Activated CD4-positive, alpha-beta memory T cell treated with anti-CD3 and anti-CD28 coated beads for 36 hours (primary cell): ENCODE measurements at regions of chr17 and their contacts with region 1.

Region 1: GRCh38 chr17:76014184-76014924 is 12.8 kb downstream of the EVPL start:
- DNase-seq: peak; percentile 85
- H3K4me3 Mint-ChIP-seq: no peak overlapping the region
- H3K27ac Mint-ChIP-seq: peak overlapping the region; percentile 15
- H3K4me1 Mint-ChIP-seq: peaks cover 5% of the 10 kb centered on the region
- H3K27me3 Mint-ChIP-seq: no peaks in the 10 kb centered on the region

Region 2: DNA sequence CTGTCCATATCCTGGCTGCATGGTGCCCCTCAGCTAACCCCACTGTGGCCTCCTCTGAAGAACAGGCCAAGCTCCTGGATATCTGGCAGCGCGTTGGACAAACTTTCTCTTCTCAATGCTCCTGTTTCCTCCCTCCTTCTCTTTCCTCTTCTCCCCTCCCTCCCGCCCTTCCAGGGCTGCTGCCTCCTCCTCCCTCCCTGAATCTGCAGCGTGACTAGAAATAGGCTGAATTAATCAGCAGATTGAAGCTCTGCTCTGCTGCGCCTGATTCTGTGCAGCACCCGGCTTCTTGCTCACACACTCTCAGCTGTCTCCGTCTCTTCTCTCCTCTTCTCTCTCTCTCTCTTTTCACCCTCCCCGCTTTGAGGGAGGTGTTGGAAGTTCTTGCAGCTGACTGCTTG is 538.1 kb before region 1 on chr17:
- CTCF ChIA-PET with region 1: no interaction called
- POLR2A ChIA-PET with region 1: no interaction called
- intact Hi-C with region 1: no loop called
- DNase-seq: no peak
- H3K4me3 Mint-ChIP-seq: no peak overlapping the region
- H3K27ac Mint-ChIP-seq: no peak overlapping the region
- H3K4me1 Mint-ChIP-seq: no peaks in the 10 kb centered on the region
- H3K27me3 Mint-ChIP-seq: no peaks in the 10 kb centered on the region

Region 3: DNA sequence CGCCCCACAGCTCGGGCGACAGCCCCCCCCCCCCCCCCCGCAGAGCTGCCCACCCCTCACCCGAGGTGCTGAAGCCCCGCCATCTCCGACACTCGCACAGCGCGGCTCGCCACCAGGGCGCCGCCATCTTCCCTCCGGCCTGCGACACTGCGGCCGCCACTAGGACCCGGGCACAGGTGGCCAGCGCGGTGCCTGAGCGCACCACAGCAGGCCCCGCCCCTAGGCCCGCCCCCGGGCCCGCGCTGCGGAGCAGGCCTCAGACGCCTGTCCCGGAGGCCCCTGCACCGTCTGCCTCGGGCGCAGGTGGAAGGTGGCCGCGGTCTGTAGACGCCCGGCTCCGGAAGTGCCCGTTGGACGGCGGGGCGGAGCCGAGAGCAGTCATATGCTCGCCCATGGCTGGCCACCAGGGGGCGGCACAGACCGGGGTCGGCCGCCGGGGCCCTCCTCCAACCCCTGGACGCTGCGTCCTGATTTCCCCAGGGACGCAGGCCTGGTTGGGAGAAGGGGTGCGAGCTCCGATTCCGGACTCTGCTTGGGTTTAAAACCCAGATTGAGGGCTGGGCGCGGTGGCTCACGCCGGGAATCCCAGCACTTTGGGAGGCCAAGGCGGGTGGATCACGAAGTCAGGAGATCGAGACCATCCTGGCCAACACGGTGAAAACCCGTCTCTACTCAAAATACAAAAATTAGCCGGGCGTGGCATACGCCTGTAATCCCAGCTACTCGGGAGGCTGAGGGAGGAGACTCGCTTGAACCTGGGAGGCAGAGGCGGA is 109.4 kb before region 1 on chr17 and contains the start of gene MRPL38:
- CTCF ChIA-PET with region 1: interaction called, 21 read pairs
- POLR2A ChIA-PET with region 1: no interaction called
- intact Hi-C with region 1: no loop called
- DNase-seq: peak; percentile 97
- H3K4me3 Mint-ChIP-seq: peak within 1 kb of the TSS; percentile 99
- H3K27ac Mint-ChIP-seq: peak within 1 kb of the TSS; percentile 90
- H3K4me1 Mint-ChIP-seq: peaks cover 17% of the 10 kb centered on the region
- H3K27me3 Mint-ChIP-seq: no peaks in the 10 kb centered on the region
- total RNA-seq, gene MRPL38: 108 TPM

Region 4: GRCh38 chr17:76056835-76057234 is 42.5 kb after region 1 on chr17:
- CTCF ChIA-PET with region 1: interaction called, 11 read pairs
- POLR2A ChIA-PET with region 1: no interaction called
- intact Hi-C with region 1: no loop called
- DNase-seq: no peak
- H3K4me3 Mint-ChIP-seq: no peak overlapping the region
- H3K27ac Mint-ChIP-seq: no peak overlapping the region
- H3K4me1 Mint-ChIP-seq: peaks cover 12% of the 10 kb centered on the region
- H3K27me3 Mint-ChIP-seq: no peaks in the 10 kb centered on the region

Region 5: DNA sequence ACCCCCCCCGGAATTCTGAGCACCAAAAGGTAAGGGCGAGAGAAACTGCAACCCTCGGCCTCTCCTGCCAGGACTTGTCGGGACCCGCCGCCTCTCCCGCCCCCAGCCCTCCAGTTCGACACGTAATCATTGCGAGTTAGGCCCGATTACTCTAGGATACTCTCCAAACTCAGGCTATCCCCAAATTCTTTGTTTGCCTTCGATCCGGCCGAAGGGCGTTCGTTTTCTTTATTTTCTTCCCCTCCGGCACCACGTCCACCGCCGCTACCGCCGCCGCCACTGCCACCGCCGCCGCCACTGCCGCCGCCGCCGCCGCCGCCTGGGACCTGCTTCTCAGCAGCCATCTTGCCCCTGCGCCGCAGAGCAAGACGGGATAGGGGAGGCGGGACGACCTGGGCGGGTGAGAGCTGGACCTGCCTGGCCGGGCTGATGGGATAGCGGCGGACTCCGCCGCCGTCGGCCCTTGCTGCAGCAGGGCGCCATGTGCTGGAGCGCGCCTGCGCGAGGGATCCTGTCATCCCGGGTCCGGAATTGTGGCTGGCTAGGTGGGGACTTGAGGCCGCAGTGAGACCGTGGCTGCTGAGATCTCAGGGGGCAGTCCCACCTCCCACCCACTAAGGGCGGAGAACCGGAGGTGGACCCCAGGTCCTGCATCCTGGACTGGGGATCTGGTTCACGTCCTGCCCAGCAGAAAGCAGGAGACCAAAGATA is 57.9 kb after region 1 on chr17 and contains the start of gene SRP68:
- CTCF ChIA-PET with region 1: interaction called, 11 read pairs
- POLR2A ChIA-PET with region 1: interaction called, 4 read pairs
- intact Hi-C with region 1: no loop called
- DNase-seq: peak; percentile 90
- H3K4me3 Mint-ChIP-seq: peak within 1 kb of the TSS; percentile 99
- H3K27ac Mint-ChIP-seq: peak within 1 kb of the TSS; percentile 100
- H3K4me1 Mint-ChIP-seq: peaks cover 45% of the 10 kb centered on the region
- H3K27me3 Mint-ChIP-seq: peaks cover 27% of the 10 kb centered on the region
- total RNA-seq, gene SRP68: 142 to 148 TPM

Region 6: GRCh38 chr17:76121932-76122430 is 107.6 kb after region 1 on chr17:
- CTCF ChIA-PET with region 1: interaction called, 15 read pairs
- POLR2A ChIA-PET with region 1: no interaction called
- intact Hi-C with region 1: no loop called
- DNase-seq: peak; percentile 35
- H3K4me3 Mint-ChIP-seq: no peak overlapping the region
- H3K27ac Mint-ChIP-seq: no peak overlapping the region
- H3K4me1 Mint-ChIP-seq: peaks cover 9% of the 10 kb centered on the region
- H3K27me3 Mint-ChIP-seq: no peaks in the 10 kb centered on the region

Region 7: DNA sequence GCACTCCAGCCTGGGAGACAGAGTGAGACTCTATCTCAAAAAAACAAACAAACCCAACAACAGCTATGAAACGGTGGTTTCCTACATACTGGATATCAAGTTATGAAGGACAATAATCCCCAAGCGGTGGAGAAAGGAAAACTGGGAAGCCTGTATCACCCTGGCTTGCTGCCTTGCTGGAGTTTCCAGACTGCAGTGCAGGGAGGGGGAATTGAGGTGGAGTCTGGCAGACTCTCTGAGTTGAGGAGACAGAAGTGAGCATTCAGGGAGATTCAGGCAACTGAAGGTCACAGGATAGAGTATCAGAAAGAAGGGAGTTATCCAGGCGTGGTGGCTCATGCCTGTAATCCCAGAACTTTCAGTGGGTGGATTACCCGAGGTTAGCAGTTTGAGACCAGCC is 281.8 kb after region 1 on chr17:
- CTCF ChIA-PET with region 1: interaction called, 30 read pairs
- POLR2A ChIA-PET with region 1: no interaction called
- intact Hi-C with region 1: loop called (anchors 2 kb)
- DNase-seq: no peak
- H3K4me3 Mint-ChIP-seq: no peak overlapping the region
- H3K27ac Mint-ChIP-seq: no peak overlapping the region
- H3K4me1 Mint-ChIP-seq: peaks cover 3% of the 10 kb centered on the region
- H3K27me3 Mint-ChIP-seq: no peaks in the 10 kb centered on the region